ENCODE measurements at regions of chr5 and their contacts with region 1.

Region 1: GRCh38 chr5:111158105-111158744 is 66.0 kb upstream of the CAMK4 start:
- DNase-seq: peak; percentile 54
- H3K4me3 ChIP-seq: no peak overlapping the region
- H3K27ac ChIP-seq: no peak overlapping the region
- H3K4me1 ChIP-seq: no peaks in the 10 kb centered on the region; a peak in 1 of 4 replicates
- H3K27me3 ChIP-seq: no peaks in the 10 kb centered on the region
- CTCF ChIP-seq: peak; percentile 99
- EP300 ChIP-seq: no peak
- RAD21 ChIP-seq: peak; percentile 99

Region 2: GRCh38 chr5:111124793-111125192 is 33.4 kb before region 1 on chr5:
- CTCF ChIA-PET with region 1: no interaction called
- POLR2A ChIA-PET with region 1: no interaction called
- DNase-seq: no peak
- H3K4me3 ChIP-seq: no peak overlapping the region
- H3K27ac ChIP-seq: no peak overlapping the region
- H3K4me1 ChIP-seq: no peaks in the 10 kb centered on the region; a peak in 2 of 4 replicates
- H3K27me3 ChIP-seq: no peaks in the 10 kb centered on the region
- CTCF ChIP-seq: no peak
- EP300 ChIP-seq: no peak
- RAD21 ChIP-seq: no peak

Region 3: GRCh38 chr5:111169269-111169668 is 11.0 kb after region 1 on chr5:
- CTCF ChIA-PET with region 1: interaction called, 22 read pairs
- POLR2A ChIA-PET with region 1: no interaction called
- DNase-seq: no peak
- H3K4me3 ChIP-seq: no peak overlapping the region
- H3K27ac ChIP-seq: no peak overlapping the region
- H3K4me1 ChIP-seq: no peaks in the 10 kb centered on the region; a peak in 1 of 4 replicates
- H3K27me3 ChIP-seq: no peaks in the 10 kb centered on the region
- CTCF ChIP-seq: no peak
- EP300 ChIP-seq: no peak
- RAD21 ChIP-seq: no peak

Region 4: DNA sequence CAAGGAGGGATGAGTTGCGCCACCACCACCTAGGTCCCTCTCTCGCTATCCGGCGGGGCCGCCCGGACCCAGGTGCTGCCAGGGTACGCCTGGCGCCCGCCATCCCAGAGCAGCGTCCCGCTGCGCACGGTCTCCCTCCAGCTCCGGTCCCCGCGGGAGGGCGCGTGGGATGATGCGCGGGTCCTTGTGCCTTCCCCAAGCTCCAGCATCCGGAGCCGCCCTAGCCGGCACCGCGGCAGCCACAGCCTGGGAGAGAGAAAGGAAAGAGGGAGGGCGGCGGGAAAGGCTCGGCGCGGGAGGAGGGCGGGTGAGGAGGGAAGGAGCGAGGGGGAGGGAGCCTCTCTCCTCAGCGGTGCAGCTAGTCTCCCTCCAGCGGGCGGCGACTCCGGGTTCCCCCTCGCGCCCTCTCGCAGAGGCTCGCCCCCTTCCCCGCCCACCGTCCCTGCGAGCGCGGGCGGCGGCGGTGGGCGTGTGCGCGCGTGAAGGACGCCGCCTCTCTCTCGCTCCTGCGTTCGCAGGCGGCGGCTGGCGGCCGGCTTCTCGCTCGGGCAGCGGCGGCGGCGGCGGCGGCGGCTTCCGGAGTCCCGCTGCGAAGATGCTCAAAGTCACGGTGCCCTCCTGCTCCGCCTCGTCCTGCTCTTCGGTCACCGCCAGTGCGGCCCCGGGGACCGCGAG is 65.8 kb after region 1 on chr5 and contains the start of gene CAMK4:
- CTCF ChIA-PET with region 1: interaction called, 10 read pairs
- POLR2A ChIA-PET with region 1: no interaction called
- DNase-seq: peak; percentile 97
- H3K4me3 ChIP-seq: peak within 1 kb of the TSS; percentile 84 to 86
- H3K27ac ChIP-seq: peak within 1 kb of the TSS; percentile 9 to 88; a peak in 3 of 4 replicates
- H3K4me1 ChIP-seq: peaks cover 0 to 25% of the 10 kb centered on the region in 2 experiments; a peak in 2 of 4 replicates
- H3K27me3 ChIP-seq: no peaks in the 10 kb centered on the region
- CTCF ChIP-seq: peak; percentile 27
- EP300 ChIP-seq: 0 out of 4 replicates have a peak, but pooled peaks of 1 of the 2 experiments have one; percentile 29
- RAD21 ChIP-seq: peak; percentile 55
- polyA plus RNA-seq, gene CAMK4: 4.1 and 4.6 TPM in 2 replicates

Region 5: GRCh38 chr5:111278845-111279504 is 120.8 kb after region 1 on chr5:
- CTCF ChIA-PET with region 1: interaction called, 13 read pairs
- POLR2A ChIA-PET with region 1: no interaction called
- DNase-seq: peak; percentile 42
- H3K4me3 ChIP-seq: no peak overlapping the region; a peak in 1 of 4 replicates
- H3K27ac ChIP-seq: peak overlapping the region in 1 of 2 experiments; percentile 43; a peak in 1 of 4 replicates
- H3K4me1 ChIP-seq: peaks cover 0 to 20% of the 10 kb centered on the region in 2 experiments; a peak in 2 of 4 replicates
- H3K27me3 ChIP-seq: no peaks in the 10 kb centered on the region
- CTCF ChIP-seq: peak; percentile 76
- EP300 ChIP-seq: no peak
- RAD21 ChIP-seq: peak; percentile 71

Region 6: DNA sequence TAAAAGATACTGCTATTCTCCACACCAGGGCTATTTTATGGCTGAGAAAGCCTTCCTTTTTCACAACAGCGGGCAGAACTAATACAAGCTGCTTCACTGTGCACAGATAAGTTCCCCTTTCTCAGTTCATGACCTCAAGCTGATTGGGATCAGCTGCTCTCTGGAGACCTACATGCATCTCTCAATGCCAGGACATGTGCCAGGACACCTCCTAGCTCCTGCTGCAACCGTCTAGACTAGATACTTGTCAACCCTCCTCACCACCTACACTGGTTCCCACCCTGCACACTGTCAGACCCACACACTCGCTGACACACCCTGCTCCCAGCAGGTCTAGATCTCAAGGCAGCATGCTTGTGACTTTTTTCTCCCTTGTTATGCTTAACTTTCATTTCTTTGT is 314.4 kb after region 1 on chr5:
- CTCF ChIA-PET with region 1: interaction called, 22 read pairs
- POLR2A ChIA-PET with region 1: no interaction called
- DNase-seq: peak; percentile 37
- H3K4me3 ChIP-seq: no peak overlapping the region
- H3K27ac ChIP-seq: peak overlapping the region in 1 of 2 experiments; percentile 91; a peak in 2 of 4 replicates
- H3K4me1 ChIP-seq: peaks cover 0 to 21% of the 10 kb centered on the region in 2 experiments; a peak in 2 of 4 replicates
- H3K27me3 ChIP-seq: no peaks in the 10 kb centered on the region
- CTCF ChIP-seq: no peak
- EP300 ChIP-seq: peak in 1 of 2 experiments; percentile 75; a peak in 2 of 4 replicates
- RAD21 ChIP-seq: peak; percentile 29; the same call in 1 of the 2 replicates

Region 7: DNA sequence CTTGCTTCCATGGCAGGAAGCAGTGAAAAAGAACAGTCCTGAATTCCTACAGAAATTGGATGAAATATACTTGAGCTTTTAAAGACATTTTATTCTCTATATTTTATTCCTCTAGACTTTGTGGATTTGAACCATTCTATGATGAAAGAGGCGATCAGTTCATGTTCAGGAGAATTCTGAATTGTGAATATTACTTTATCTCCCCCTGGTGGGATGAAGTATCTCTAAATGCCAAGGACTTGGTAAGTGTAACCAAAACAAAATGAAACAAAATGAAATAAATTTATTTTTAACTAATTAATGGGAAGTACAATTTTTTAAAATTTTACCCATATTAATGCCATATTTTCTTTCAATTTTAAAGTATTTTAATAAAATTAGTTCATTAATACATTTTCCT is 320.0 kb after region 1 on chr5:
- CTCF ChIA-PET with region 1: interaction called, 22 read pairs
- POLR2A ChIA-PET with region 1: no interaction called
- DNase-seq: peak; percentile 22
- H3K4me3 ChIP-seq: no peak overlapping the region
- H3K27ac ChIP-seq: no peak overlapping the region
- H3K4me1 ChIP-seq: peaks cover 0 to 6% of the 10 kb centered on the region in 2 experiments; a peak in 2 of 4 replicates
- H3K27me3 ChIP-seq: no peaks in the 10 kb centered on the region
- CTCF ChIP-seq: peak; percentile 58
- EP300 ChIP-seq: no peak
- RAD21 ChIP-seq: peak; percentile 75